Posterior cingulate gyrus (tissue), 11 donors: ENCODE measurements at regions of chr1 and their contacts with region 1.

Region 1: GRCh38 chr1:212477014-212477679 is 44.4 kb downstream of the NENF start:
- DNase-seq: peak; percentile 64 to 97 (median 84)

Region 2: DNA sequence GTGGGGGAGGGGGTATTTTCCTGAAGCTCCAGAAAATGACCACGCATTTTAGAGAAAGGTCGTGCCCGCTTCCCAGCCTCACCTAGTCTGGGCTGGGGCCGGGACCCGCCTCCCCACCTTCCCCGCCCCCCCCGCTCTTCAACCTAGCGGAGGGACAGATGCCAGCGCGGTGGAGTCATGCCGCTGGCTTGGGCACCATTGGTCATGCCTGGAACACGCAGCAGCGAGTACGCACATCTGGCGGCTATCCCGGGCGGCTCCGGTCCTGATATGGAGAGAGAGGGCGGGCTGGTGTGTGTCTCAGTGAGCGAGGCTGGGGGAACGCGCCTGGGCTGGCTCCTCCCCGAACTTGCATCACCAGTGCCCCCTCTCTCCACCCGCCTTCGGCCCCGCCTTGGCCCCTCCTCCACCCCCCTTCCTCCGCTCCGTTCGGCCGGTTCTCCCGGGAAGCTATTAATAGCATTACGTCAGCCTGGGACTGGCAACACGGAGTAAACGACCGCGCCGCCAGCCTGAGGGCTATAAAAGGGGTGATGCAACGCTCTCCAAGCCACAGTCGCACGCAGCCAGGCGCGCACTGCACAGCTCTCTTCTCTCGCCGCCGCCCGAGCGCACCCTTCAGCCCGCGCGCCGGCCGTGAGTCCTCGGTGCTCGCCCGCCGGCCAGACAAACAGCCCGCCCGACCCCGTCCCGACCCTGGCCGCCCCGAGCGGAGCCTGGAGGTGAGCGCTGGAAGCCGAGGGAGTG is 131.2 kb after region 1 on chr1 and contains the start of gene ATF3:
- intact Hi-C with region 1: loop called (anchors 2 kb)
- DNase-seq: peak; percentile 95 to 100 (median 98)

Region 3: GRCh38 chr1:212665241-212666115 is 188.3 kb after region 1 on chr1:
- intact Hi-C with region 1: loop called (anchors 10 kb)
- DNase-seq: peak; percentile 34 to 96 (median 70)

Region 4: DNA sequence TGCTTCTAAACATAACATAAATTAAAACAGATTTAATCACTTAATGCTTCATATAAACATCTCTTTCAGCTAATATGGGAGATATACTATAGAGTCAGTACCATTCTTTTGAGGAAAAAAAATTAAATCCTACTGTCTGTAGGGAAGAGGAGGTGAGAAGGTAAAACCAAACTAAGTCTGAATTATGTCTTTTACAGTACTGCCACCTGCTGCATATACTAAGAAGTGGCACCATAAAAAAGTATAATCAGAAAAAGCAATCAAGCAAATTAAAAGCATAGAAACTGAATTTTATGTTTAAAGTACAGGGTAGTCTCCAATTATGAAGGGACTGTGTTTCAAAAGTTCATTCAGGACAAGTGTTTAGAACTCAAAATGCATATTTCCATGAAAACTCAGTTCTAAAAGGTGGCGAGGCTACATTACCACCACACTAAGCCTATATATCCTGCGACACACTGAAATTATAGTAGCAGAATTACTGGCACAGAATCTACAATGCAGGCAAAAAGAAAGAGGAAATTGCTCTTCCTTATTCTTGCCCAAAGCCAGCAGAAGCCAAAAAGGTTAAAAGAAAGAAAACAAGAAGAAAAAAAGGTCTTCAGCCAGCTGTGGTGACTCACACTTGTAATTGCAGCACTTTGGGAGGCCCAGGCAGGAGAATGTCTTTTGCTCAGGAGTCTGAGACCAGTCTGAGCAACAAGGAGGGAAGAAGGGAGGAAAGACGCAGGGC is 305.4 kb after region 1 on chr1:
- intact Hi-C with region 1: loop called (anchors 5 kb)
- DNase-seq: no peak

Region 5: GRCh38 chr1:212951126-212951946 is 474.2 kb after region 1 on chr1:
- intact Hi-C with region 1: no loop called
- DNase-seq: peak in 3 of 10 donors; percentile 15 to 85 (median 23)